ENCODE measurements at regions of chr16 and their contacts with region 1.

Region 1: DNA sequence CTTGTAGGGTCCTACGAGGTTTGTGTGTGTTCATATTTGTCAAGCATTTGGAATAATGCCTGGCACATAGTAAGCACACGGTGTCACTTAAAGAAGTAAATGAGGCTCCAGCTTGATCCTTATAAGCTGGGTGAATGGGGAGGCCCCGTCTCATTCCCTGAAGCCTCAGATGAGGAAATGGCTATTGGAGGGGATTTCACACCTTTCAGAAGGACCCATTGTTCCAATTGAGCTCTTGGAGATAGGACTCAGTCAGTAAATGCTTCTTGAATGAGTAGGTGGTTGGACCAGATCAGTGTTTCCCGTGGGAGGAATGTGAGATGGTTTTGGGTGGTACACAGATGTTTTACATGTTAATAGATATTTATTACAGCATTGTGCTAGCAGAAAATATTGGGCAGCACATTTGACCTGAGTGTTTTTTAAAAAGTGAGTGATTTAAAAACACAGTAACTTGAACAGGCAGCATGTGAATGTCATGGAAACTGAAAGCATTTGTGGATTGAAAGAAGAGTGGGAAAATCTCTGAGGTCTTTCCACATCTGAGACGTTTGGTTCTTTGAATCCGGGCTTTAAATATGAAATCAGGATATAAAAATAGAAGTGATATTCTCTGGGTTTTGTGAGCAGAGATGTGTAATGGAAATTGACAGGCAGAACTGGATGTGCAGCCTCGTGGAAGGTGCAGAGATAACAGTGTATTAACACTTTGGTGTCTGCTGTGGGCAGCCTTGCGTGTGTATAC is 36.4 kb upstream of the ARHGAP17 start:
- DNase-seq: peak; percentile 13
- ATAC-seq: no peak
- H3K4me3 ChIP-seq: peak overlapping the region; percentile 40; the same call in 1 of the 2 replicates
- H3K27ac ChIP-seq: peak overlapping the region; percentile 25
- H3K4me1 ChIP-seq: peaks cover 34% of the 10 kb centered on the region
- H3K27me3 ChIP-seq: no peaks in the 10 kb centered on the region
- CTCF ChIP-seq: no peak

Region 2: GRCh38 chr16:24988593-24989338 is 62.8 kb before region 1 on chr16:
- CTCF ChIA-PET with region 1: no interaction called
- POLR2A ChIA-PET with region 1: no interaction called
- intact Hi-C with region 1: loop called (anchors 1 kb)
- DNase-seq: peak; percentile 92
- ATAC-seq: peak; percentile 81
- H3K4me3 ChIP-seq: peak overlapping the region; percentile 52
- H3K27ac ChIP-seq: peak overlapping the region; percentile 98
- H3K4me1 ChIP-seq: peaks cover 53% of the 10 kb centered on the region
- H3K27me3 ChIP-seq: no peaks in the 10 kb centered on the region
- CTCF ChIP-seq: no peak

Region 3: GRCh38 chr16:25111403-25112166 is 60.0 kb after region 1 on chr16 and contains the start of gene LCMT1:
- CTCF ChIA-PET with region 1: no interaction called
- POLR2A ChIA-PET with region 1: interaction called, 3 read pairs
- intact Hi-C with region 1: loop called (anchors 5 kb)
- DNase-seq: peak; percentile 97
- ATAC-seq: peak; percentile 89
- H3K4me3 ChIP-seq: peak within 1 kb of the TSS; percentile 79
- H3K27ac ChIP-seq: peak within 1 kb of the TSS; percentile 31; the same call in 1 of the 2 replicates
- H3K4me1 ChIP-seq: peaks cover 18% of the 10 kb centered on the region
- H3K27me3 ChIP-seq: no peaks in the 10 kb centered on the region
- CTCF ChIP-seq: no peak
- total RNA-seq, gene LCMT1: 30.5 and 31.0 TPM in 2 replicates

Region 4: GRCh38 chr16:25135254-25135878 is 83.8 kb after region 1 on chr16:
- CTCF ChIA-PET with region 1: no interaction called
- POLR2A ChIA-PET with region 1: no interaction called
- intact Hi-C with region 1: loop called (anchors 2 kb)
- DNase-seq: peak; percentile 78
- ATAC-seq: peak; percentile 98
- H3K4me3 ChIP-seq: no peak overlapping the region
- H3K27ac ChIP-seq: 0 out of 2 replicates have a peak overlapping the region, but pooled peaks have one; percentile 19
- H3K4me1 ChIP-seq: no peaks in the 10 kb centered on the region
- H3K27me3 ChIP-seq: no peaks in the 10 kb centered on the region
- CTCF ChIP-seq: peak; percentile 67

Region 5: GRCh38 chr16:25299792-25300590 is 248.4 kb after region 1 on chr16:
- CTCF ChIA-PET with region 1: no interaction called
- POLR2A ChIA-PET with region 1: no interaction called
- intact Hi-C with region 1: no loop called
- DNase-seq: no peak
- ATAC-seq: no peak
- H3K4me3 ChIP-seq: no peak overlapping the region
- H3K27ac ChIP-seq: no peak overlapping the region
- H3K4me1 ChIP-seq: peaks cover 7% of the 10 kb centered on the region
- H3K27me3 ChIP-seq: no peaks in the 10 kb centered on the region
- CTCF ChIP-seq: no peak